Activated naive CD8-positive, alpha-beta T cell treated with anti-CD3 and anti-CD28 coated beads, Interleukin-2, amount 10 ng/mL, durations not matched to agents 7 days and 5 days (primary cell): ENCODE measurements at regions of chr17 and their contacts with region 1.

Region 1: DNA sequence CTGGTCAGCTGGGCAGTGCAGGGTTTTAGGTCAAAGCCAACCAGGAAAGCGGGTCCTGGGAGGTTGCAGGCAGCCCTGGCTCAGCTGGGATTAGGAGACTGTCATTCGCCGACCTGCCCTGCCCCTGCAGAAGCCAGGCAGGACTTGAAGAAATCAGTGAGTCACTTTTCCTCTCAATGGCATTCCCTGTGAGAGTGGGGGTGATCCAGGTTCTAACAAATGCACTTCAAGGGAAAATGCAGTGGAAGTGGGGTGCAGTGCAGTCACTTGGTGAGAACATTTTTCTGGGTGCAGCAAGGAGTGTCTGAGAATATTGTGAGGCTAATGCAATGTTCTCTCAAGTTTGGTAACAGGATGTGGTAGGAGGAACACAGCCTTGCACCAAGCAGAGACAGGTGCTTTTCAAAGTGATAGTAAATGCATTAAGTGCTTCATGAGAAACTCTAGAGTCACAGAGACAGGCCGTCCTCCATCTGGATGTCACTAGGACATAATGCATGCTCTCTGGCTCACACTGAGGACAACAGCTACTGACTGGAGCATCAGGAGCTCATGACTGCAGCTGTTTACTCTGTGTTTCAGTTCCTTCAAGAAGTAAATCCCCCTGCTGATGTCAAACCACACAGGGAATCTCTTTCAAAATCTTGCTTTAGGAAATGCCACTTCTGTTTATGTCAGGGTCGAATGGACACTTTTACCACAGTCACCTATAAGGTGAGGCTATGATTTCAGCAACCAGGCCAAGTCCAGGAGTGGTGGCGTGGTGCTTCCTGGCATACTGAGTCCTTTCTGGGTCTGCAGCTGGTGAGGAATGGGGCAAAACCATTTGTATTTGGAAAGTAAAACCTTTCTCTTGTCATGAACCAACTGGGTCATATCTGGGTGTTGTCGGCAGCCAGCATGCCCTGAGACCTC is 16.7 kb downstream of the CDK5R1 start:
- DNase-seq: peak; percentile 57
- ATAC-seq: peak; percentile 98
- H3K4me3 Mint-ChIP-seq: peak overlapping the region; percentile 39
- H3K27ac Mint-ChIP-seq: peak overlapping the region; percentile 99
- H3K4me1 Mint-ChIP-seq: peaks cover 37% of the 10 kb centered on the region
- H3K27me3 Mint-ChIP-seq: no peaks in the 10 kb centered on the region

Region 2: GRCh38 chr17:32486111-32486700 is 17.3 kb before region 1 on chr17:
- POLR2A ChIA-PET with region 1: interaction called, 14 read pairs
- DNase-seq: peak; percentile 83
- ATAC-seq: peak; percentile 66
- H3K4me3 Mint-ChIP-seq: peak overlapping the region; percentile 55
- H3K27ac Mint-ChIP-seq: peak overlapping the region; percentile 39
- H3K4me1 Mint-ChIP-seq: peaks cover 34% of the 10 kb centered on the region
- H3K27me3 Mint-ChIP-seq: no peaks in the 10 kb centered on the region